Posterior vena cava (tissue), 2 donors: ENCODE measurements at regions of chr6 and their contacts with region 1.

Region 1: DNA sequence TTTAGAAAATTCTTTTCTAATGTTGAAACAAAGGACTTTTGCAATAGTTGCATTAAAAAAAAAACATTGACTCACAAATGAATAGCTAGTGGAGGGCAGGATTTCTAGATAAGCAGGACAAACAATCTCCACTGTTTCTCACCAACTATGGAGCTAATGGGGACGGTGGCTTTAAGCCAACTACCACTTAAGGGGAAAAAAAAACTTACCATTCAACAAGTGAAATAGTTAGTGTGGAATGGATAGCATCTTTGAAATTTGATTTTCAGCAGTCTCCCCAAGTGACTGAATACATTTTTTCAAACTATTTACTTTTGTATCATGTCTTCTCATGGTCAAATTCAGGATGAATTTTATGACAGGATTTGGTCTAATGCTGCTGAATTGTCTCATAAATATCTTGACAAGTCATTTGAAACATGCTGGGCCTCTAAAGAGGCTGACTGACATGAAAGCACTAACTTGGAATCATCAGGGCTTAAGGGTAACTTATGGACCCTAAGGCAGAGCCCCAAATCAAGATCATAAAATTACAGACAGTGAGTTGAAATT is 100.5 kb downstream of the EYA4 start:
- DNase-seq: no peak

Region 2: DNA sequence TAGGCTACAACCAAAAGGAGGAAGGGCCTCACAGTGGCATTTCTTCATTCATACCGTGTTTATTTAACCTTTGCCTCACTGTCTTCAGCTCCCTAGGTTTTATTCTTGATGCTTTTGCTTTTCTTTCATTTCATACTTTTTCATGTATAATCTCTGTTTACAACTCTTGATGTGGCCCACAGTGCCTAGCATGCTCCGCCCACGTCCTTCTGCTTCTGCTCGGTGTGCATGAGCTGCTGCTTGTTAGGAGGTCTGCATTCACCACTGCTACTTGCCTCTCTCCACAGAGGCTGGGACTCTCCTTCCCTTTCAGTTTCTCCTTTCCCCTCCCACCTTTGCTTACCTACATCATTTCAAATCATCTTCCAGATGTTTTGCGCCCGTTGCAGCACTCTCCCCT is 47.0 kb after region 1 on chr6:
- intact Hi-C with region 1: loop called in 1 of 2 experiments (anchors 2 kb)
- DNase-seq: no peak

Region 3: GRCh38 chr6:133778414-133779130 is 436.9 kb after region 1 on chr6:
- intact Hi-C with region 1: no loop called
- DNase-seq: no peak

Region 4: DNA sequence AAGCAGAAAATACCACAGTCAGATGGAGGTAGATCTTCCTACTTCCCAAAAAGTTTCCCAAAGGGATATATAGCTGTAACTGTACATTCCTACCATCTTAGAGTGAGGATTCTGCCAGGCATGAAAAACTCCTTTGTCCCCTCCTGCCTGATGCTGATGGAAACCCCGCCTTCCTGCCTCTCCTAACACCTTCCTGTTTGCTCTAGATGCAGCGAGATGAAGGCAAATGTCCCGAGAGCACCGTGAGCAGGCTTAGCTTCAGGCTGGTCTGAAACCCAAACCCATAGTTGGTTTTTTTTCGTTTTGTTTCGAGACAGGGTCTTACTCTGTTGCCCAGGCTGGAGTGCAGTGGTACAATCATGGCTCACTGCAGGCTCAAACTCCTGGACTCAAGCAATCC is 1895.0 kb after region 1 on chr6:
- intact Hi-C with region 1: loop called in 1 of 2 experiments (anchors 5 kb)
- DNase-seq: no peak